Pancreas (tissue), 10 donors: ENCODE measurements at regions of chr15 and their contacts with region 1.

Region 1: GRCh38 chr15:92797168-92797951 is 102.8 kb upstream of the CHD2 start:
- DNase-seq: peak in 3 of 6 donors; percentile 8 to 57 (median 49)
- ATAC-seq: peak; percentile 81 to 91 (median 90)
- H3K4me3 ChIP-seq: no peak overlapping the region
- H3K27ac ChIP-seq: peak overlapping the region in 2 of 4 donors; percentile 41 to 46
- H3K4me1 ChIP-seq: no peaks in the 10 kb centered on the region
- H3K27me3 ChIP-seq: no peaks in the 10 kb centered on the region
- CTCF ChIP-seq: peak; percentile 74 to 80 (median 76)

Region 2: GRCh38 chr15:92510163-92510882 is 287.0 kb before region 1 on chr15:
- intact Hi-C with region 1: no loop called
- DNase-seq: no peak
- ATAC-seq: no peak
- H3K4me3 ChIP-seq: no peak overlapping the region
- H3K27ac ChIP-seq: no peak overlapping the region
- H3K4me1 ChIP-seq: peaks cover 0 to 6% (median 0%) of the 10 kb centered on the region in 3 donors
- H3K27me3 ChIP-seq: no peaks in the 10 kb centered on the region
- CTCF ChIP-seq: no peak

Region 3: DNA sequence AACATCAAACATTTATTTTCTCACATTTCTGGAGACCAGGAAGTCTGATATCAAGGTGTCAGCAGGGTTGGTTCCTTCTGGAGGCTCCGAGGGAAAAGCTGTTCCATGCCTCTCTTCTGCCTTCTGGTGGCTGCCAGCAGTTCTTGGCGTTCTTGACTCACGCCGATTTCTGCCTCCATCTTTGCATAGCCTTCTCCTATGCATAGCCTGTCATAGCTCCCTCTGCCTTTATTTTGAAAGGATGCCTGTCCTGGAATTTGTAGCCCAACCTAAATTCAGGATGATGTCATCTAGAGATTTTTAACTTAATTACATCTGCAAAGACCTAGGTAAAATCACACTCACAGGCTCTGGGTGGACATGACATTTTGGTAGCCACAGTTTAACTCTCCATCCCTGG is 221.2 kb after region 1 on chr15:
- intact Hi-C with region 1: loop called in 1 of 3 experiments (anchors 10 kb)
- DNase-seq: no peak
- ATAC-seq: peak in 1 of 4 donors; percentile 24
- H3K4me3 ChIP-seq: no peak overlapping the region
- H3K27ac ChIP-seq: no peak overlapping the region
- H3K4me1 ChIP-seq: no peaks in the 10 kb centered on the region
- H3K27me3 ChIP-seq: no peaks in the 10 kb centered on the region
- CTCF ChIP-seq: no peak